ENCODE measurements at regions of chr3 and their contacts with region 1.

Region 1: GRCh38 chr3:72270072-72270681 is 485.2 kb upstream of the PROK2 start:
- DNase-seq: peak; percentile 79 to 87
- ATAC-seq: peak; percentile 88 to 95 (median 92)
- H3K4me3 ChIP-seq: no peak overlapping the region
- H3K27ac ChIP-seq: peak overlapping the region in 7 of 10 donors; percentile 14 to 76 (median 40)
- H3K4me1 ChIP-seq: peaks cover 9 to 62% (median 49%) of the 10 kb centered on the region in 9 donors
- H3K27me3 ChIP-seq: no peaks in the 10 kb centered on the region
- CTCF ChIP-seq: no peak

Region 2: GRCh38 chr3:71875461-71875947 is 394.7 kb before region 1 on chr3:
- intact Hi-C with region 1: loop called in 6 of 10 experiments (anchors 10 kb)
- DNase-seq: peak; percentile 61 to 72
- ATAC-seq: peak; percentile 83 to 97 (median 90)
- H3K4me3 ChIP-seq: no peak overlapping the region
- H3K27ac ChIP-seq: no peak overlapping the region
- H3K4me1 ChIP-seq: peaks cover 0 to 8% (median 0%) of the 10 kb centered on the region in 9 donors
- H3K27me3 ChIP-seq: peaks cover 0 to 12% (median 2%) of the 10 kb centered on the region in 7 donors
- CTCF ChIP-seq: peak; percentile 67 to 94 (median 88)

Region 3: DNA sequence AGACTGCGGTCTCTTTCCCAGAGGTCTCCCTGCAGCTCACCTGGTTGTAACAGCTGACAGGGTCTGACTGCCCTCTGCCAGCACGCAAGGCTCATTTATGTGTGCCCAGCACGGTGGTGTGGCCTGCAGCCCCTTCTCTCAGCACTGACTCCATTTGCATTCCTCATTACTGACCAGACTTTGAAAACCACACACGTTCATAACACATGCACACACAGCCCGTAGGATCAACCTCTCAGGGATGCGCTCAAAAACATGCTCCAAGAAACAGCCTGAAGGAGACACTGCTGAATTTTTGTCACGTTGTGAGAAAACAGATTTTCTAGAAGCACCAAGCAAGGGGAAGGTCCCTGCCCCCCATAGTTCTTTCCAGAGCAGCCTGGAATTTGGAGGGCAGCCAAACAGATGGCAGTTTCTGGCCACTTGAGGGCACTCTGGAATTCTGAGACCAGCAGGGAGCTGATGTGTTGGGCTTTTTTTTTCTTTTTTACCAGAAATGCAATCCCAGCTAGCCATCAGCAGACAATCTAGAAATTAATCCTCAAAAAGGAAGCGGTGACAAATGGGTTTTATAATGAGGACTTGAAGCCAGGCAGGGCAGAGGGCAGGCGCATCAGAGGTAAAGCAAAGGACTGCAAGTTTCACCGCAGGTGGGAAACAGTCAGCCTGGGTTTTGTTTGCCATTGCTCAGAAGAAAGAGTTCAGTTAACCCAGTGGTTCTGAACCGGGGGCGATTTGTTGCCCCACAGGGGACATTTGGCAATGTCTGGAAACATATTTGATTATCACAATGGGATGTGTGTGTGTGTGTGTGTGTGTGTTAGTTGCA is 314.7 kb before region 1 on chr3:
- intact Hi-C with region 1: loop called in 6 of 10 experiments (anchors 10 kb)
- DNase-seq: peak; percentile 59 to 82
- ATAC-seq: peak; percentile 34 to 85 (median 75)
- H3K4me3 ChIP-seq: no peak overlapping the region
- H3K27ac ChIP-seq: no peak overlapping the region
- H3K4me1 ChIP-seq: peaks cover 0 to 13% (median 7%) of the 10 kb centered on the region in 9 donors
- H3K27me3 ChIP-seq: peaks cover 0 to 4% (median 0%) of the 10 kb centered on the region in 7 donors
- CTCF ChIP-seq: peak; percentile 42 to 84 (median 72)

Region 4: DNA sequence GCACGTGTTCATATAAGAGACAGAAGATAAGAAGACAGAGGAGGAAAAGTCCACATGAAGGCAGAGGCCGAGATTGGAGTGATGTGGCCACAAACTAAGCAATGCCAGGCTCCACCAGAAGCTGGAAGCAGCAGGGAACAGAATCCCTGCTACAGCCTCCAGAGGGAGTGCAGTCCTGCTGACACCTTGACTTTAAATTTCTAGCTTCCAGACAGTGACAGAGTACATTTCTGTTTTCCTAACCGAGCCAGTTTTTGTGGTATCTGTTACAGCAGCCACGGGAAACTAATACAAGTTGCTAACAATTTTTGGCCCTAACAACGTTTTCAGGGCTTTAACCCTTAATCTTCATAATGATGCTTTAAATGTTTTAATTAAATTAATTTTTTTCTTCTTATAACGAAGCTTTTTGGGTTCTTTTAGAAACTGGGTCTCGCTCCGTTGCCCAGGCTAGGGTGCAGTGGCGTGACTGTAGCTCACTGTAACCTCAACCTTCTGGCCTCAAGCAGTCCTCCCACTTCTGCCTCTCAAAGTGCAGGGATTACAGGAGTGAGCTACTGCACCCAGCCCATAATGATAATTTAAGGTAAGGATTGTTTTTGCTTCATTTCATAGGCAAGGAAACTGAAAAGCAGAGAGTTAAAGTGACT is 283.0 kb before region 1 on chr3:
- intact Hi-C with region 1: no loop called
- DNase-seq: no peak
- ATAC-seq: no peak
- H3K4me3 ChIP-seq: no peak overlapping the region
- H3K27ac ChIP-seq: no peak overlapping the region
- H3K4me1 ChIP-seq: peaks cover 0 to 31% (median 0%) of the 10 kb centered on the region in 9 donors
- H3K27me3 ChIP-seq: no peaks in the 10 kb centered on the region
- CTCF ChIP-seq: peak in 8 of 9 donors; percentile 19 to 49 (median 44)

Region 5: DNA sequence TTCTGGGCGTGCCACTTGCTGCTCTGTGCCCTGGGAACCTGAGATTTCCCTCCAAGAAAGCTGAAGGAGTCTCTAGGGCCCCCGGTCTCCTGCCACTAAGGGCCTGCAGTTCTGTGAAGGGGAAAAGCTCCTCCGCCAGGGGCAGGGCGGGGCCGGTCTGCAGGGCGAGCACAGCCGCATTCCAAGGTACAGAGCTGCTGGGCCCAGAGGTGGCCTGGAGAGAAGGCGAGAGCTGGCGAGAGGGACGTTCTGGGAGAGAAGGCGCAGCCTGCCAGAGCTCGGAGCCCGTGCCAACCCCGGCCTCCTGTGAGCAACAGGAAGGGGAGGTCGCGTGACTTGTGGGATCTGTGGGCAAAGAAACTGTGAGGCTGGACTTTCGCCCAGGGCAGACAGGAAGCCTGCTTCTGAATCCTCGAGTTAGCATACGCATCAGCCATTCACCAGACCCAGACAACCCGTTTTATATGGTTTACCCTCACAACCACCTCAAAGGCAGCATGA is 77.7 kb after region 1 on chr3:
- intact Hi-C with region 1: loop called in 1 of 10 experiments (anchors 10 kb)
- DNase-seq: peak; percentile 74 to 77
- ATAC-seq: peak; percentile 55 to 82 (median 79)
- H3K4me3 ChIP-seq: peak overlapping the region in 1 of 10 donors; percentile 11
- H3K27ac ChIP-seq: peak overlapping the region in 7 of 10 donors; percentile 7 to 48 (median 23)
- H3K4me1 ChIP-seq: peaks cover 0 to 45% (median 19%) of the 10 kb centered on the region in 9 donors
- H3K27me3 ChIP-seq: no peaks in the 10 kb centered on the region
- CTCF ChIP-seq: peak in 3 of 9 donors; percentile 21 to 27 (median 21)

Measured in heart right ventricle (tissue), 16 donors.